ENCODE measurements at regions of chr2 and their contacts with region 1.

Region 1: DNA sequence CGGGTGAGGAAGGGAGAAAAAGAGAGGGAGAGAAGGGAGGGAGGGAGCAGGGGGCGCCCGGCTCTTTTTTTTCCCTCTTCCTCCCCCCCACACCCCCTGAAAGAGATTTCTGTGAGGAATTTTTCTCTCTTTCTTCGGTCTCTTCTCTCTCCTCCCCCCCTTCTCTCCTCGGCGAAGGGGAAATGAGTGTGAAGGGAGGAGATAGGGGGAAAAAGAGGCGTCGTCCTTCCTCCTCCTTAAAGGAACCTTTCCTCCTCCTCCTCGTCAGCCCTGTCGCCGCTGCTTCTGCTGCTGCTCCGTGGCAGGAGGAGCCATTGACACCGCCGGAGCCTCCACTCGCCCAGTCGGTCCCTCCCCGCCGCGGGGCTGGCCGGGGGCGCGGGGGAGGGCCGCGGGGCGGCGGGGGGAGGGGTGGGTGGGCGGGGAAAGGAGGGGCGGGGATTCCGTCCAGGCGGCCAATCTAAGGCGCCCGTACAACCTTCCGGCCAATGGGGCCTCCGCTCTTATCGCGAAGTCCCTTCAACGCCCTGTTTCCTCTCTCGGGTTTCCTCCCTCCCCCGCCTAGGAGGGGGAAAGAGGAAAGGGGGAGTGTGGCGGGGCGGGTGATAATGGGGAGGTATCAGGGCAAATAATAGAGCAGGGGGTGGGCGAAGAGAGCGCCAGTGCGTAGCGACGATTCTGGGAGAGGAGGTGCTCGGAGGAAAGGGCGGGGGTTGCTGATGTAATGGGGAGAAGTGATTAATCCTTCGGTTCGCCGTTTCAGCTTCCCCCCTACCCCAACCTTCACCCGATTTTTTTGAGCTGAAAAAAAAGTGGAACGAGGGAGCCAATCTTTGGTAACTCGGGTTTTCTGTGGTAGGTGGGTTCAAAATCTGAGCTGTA is at the start of gene FBXO11:
- DNase-seq: peak; percentile 98
- total RNA-seq, gene FBXO11: 36.8 TPM

Region 2: GRCh38 chr2:47607005-47607679 is 299.3 kb before region 1 on chr2:
- intact Hi-C with region 1: no loop called
- DNase-seq: no peak

Region 3: DNA sequence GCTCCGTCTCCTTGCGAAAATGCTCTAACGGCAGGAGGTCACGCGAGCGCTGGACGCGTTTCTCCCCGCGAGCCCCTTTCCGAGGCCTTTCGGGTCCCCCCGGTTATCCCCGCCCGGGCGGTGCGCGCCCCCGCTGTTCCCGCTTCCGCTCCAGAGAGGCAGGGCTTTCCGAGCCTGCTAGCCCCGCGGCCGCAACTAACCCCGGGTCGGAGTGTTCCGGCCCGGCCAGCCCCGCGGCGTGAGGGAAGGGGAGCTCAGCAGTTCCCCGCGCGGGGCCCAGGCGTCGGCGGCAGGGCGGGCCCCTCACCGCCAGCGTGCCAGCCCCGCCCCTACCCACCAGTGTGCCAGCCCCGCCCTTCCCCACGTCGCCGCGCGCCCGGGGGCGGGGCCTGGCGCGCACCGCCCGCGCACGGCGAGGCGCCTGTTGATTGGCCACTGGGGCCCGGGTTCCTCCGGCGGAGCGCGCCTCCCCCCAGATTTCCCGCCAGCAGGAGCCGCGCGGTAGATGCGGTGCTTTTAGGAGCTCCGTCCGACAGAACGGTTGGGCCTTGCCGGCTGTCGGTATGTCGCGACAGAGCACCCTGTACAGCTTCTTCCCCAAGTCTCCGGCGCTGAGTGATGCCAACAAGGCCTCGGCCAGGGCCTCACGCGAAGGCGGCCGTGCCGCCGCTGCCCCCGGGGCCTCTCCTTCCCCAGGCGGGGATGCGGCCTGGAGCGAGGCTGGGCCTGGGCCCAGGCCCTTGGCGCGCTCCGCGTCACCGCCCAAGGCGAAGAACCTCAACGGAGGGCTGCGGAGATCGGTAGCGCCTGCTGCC is 123.5 kb before region 1 on chr2 and contains the start of gene MSH6:
- intact Hi-C with region 1: loop called (anchors 5 kb)
- DNase-seq: peak; percentile 95
- total RNA-seq, gene MSH6: 22.0 TPM

Region 4: DNA sequence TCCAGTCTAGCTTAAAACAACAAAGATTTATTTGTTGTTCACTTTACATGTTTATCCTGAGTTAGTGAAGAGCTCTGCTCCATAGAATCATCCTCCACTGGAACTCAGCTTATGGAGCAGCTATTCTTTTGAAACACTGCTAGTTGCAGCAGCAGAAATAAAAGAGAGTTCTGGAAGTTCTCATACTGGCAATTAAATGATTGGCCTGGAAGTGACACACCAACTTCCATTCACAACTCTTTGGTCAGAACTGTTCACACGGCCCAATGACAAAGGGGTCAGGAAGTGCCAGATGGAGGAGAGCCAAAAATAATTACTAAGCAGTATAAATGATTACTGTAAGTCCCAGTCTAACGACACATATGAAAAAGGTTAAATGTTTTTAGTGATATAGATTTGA is 39.2 kb before region 1 on chr2:
- intact Hi-C with region 1: loop called (anchors 2 kb)
- DNase-seq: no peak

Region 5: DNA sequence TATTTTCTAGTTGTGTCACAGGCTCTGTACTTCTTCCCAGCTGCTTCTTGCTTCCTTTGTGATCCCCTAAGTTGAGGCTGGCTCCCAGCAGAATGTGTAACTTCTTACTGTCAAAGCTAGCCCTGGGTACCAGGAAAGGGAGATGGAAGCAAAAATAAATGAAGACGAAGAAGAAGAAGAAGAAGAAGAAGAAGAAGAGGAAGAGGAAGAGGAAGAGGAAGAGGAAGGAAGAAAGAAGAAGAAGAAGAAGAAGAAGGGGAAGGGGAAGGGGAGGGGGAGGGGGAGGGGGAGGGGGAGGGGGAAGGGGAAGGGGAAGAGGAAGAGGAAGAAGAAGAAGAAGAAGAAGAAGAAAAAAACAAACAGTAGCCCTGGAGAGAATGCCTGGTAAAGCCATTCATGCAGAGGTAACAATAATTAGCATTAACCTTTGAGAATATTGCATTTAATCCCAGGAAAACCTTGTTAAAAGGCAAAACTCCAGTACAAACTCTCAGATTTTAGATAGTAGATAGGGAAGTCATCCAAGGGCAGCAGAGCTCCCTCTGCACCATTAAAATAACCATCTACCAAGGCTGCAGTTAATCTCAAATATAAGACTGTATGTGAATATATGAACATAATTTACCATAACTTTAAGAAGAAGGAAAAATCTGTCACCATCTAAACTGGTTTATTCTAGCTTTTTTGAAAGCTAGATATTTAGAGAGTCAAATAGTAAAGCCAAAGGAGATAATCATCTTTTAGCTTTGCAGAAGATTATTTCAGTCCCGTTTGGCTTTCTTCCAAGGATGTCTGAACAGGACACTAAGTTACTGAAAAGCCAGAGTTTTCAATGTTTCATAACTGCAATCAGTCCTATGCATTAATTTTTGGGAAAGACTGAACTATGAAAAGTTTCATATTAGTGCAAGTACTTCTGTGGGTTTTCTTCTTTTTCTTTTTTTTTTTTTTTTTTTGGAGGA is 44.2 kb after region 1 on chr2:
- intact Hi-C with region 1: no loop called
- DNase-seq: no peak

Region 6: GRCh38 chr2:48107326-48107925 is 201.0 kb after region 1 on chr2:
- intact Hi-C with region 1: loop called (anchors 1 kb)
- DNase-seq: no peak

Region 7: DNA sequence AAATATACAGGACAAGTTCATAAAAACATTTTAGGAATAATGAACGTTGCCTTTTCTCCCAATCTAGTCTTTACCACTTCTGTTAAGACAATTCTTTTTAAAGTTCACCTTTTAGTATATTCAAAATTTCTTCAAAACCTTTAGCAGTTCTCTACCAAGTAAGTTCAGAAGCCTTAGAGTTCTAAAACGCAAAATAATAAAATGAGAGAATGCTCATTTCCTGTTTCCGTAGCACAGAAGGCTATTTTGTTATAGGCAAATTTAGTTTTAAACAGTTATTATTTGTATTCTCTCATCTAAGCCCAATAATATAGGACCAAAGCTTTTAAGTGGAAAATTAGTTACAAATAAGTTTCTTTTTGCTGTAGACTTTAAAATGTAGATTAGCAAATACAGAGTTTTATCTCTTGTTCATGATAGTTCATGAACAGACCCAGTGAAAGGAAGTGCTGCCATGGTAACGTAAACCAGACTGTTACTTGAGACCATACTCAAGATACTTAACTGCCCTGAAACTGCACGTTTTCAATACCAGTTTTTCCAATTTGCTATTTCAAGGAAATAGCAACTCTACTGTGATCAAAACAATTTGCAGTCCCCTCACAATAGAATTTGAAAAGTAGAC is 450.4 kb after region 1 on chr2:
- intact Hi-C with region 1: loop called (anchors 10 kb)
- DNase-seq: no peak

Region 8: GRCh38 chr2:48420512-48421197 is 514.3 kb after region 1 on chr2:
- intact Hi-C with region 1: loop called (anchors 5 kb)
- DNase-seq: peak; percentile 94

Measured in cardiac septum (tissue), 1 donor.